BJ (cell line): ENCODE measurements at regions of chr2 and their contacts with region 1.

Region 1: DNA sequence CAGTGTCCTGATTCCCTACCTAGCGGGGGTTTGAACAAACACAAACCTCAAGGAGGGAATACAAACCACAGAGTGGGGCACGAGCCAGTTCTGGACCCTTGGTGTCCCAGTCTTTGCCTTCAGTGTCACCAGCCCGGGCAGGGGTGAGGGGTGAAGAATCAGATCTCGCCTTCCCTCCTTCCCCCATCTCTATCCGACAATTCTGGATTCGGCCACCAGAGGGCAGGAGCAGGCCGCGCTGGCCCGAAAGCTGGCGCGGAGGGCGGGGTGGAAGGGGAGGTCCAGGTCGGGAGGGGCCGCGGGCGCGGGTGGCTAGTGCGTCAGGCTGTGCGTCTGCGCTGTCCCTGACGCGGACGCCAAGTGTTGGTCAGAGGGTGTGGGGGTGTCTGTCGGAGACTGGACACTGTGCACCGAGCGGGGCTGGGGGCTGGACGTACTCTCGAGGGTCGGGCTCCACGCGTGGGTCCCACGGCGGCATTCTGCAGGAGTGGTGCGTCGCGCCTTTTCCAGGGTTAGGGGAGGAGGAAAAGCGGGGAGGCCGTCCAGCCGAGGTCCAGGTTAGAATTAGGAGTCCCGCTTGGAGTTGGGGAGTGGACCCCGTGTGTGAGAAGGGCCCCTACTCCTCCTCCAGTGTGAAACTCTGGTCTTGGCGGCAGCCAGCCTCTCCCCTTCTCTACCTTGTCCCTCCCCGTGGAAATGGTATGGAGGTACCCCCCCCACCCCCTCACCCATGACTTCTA is 2.9 kb upstream of the CRYBA2 start:
- DNase-seq: no peak
- H3K4me3 ChIP-seq: peak overlapping the region; percentile 40
- H3K27me3 ChIP-seq: peaks cover 69% of the 10 kb centered on the region
- CTCF ChIP-seq: peak; percentile 96

Region 2: DNA sequence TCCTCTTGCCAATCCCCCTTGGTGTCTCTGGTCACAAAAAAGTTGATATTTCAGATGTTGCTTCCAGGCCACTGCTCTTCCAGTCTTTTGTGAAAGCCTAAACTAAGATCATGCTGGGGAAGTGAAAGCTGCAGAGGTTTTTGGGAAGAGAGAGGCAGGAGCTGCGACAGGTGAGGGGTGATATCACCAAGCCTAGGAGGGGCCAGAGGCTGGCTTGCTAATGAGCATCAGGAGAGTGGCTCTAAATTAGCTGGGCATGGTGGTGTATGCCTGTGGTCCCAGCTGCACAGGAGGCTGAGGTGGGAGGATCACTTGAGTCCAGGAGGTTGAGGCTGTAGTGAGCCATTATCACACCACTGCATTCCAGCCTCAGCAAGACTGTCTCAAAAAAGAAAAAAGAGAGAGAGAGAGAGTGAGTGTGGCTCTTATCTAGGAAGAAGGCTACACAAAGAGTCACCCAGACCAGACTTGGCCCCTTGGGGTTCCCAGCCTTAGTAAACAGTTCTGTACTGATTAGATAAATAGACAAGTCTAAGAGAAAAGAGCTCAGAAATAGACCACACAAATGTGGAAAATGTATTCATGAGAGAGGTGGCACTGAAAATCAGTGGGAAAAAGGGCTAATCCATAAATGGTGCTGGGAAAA is 51.3 kb before region 1 on chr2:
- CTCF ChIA-PET with region 1: no interaction called
- POLR2A ChIA-PET with region 1: no interaction called
- DNase-seq: no peak
- H3K4me3 ChIP-seq: no peak overlapping the region
- H3K27me3 ChIP-seq: peaks cover 3% of the 10 kb centered on the region
- CTCF ChIP-seq: no peak

Region 3: GRCh38 chr2:219155054-219155644 is 159.0 kb after region 1 on chr2:
- CTCF ChIA-PET with region 1: interaction called, 20 read pairs
- POLR2A ChIA-PET with region 1: no interaction called
- DNase-seq: no peak
- H3K4me3 ChIP-seq: no peak overlapping the region
- H3K27me3 ChIP-seq: no peaks in the 10 kb centered on the region
- CTCF ChIP-seq: peak; percentile 48

Region 4: DNA sequence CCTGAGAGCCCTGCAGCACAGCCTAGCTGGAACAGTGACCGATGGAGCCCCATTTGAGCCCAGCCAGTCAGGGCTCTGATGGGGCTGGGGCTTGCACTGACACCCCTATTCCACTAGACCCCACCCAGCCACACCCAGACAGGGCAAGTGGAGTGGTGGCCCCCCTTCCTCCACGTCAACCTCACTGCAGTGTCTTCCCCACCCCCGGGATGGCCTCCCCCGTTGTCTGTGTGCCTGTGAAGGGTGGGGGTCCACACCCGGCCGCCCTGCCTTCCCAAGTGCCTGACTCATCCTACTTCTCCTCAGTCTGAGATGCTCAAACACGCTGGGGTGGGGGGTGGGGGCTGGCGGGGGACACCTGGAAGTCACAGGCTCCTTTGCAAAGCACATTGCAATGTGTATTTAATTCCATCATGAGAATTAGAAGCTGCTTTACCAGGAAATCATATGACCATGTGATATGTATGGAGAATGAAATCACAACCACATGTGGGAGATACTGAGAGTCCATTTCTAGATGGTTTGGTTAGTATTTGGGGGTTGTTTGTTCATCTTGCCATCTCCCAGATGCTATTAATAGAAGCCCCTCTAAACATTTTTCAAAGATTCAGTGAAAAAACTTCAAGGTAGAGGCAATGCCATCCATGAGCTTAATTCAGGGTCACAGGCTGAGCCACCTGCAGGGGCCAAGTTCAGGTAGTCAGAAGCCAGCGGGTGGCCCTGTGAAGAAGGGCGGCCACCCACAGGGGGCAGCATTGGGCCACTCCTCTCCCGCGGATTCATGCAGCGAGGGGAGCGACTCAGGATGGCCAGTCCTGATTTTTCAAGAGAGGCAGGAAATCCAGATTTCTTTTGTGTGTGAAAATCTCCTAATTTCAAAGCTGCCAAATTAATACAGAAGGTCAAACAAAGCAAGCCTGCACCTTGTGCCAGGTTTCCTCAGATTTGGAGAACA is 479.8 kb after region 1 on chr2:
- CTCF ChIA-PET with region 1: no interaction called
- POLR2A ChIA-PET with region 1: no interaction called
- DNase-seq: no peak
- H3K4me3 ChIP-seq: no peak overlapping the region
- H3K27me3 ChIP-seq: no peaks in the 10 kb centered on the region
- CTCF ChIP-seq: peak; percentile 93